Activated T-helper 2 cell treated with anti-CD3 and anti-CD28 coated beads, Interferon-gamma antibody, Interleukin-2, Interleukin-4, amounts not matched to agents 10 μg/mL and 5 μg/mL and 100 μg/mL, durations not matched to agents 14 hours and 24 hours and 36 hours (primary cell): ENCODE measurements at regions of chr7 and their contacts with region 1.

Region 1: DNA sequence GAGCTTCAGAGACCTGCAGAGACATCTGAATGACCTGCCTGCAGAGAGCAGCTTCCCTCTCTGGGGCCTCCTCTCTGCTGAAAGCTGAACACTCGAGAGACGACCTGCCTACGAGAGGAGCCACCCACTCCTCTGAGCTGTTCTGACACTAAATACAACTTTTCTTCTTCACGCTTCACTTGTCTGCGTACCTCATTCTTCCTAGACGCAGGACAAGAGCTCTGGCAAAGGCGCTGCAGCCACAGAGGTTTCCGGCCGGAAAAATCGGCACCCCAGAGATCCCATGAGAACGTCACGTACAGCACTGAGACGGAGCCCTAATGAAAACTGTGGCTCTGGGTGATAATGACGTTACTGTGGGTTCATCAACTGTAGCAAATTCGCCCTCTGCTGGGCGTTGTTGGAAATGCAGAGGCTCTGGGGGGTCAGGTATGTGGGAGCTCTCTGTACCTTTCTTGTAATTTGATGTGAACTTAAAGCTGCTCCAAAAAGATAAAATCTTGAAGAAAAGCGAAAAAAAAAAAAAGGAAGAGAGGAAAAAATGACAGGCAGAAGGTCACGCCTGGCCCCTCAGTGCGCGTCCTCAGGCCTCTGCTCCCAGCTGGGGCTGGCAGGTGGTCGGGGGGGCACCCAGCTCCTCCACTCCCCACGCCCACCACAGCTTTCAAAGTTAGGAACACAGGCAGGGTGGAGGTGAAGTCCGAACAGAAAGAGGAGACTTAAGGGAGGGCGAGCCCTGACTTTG is 120.7 kb downstream of the DYNC2I1 start:
- DNase-seq: peak; percentile 79
- H3K4me3 Mint-ChIP-seq: peak overlapping the region; percentile 77
- H3K27ac Mint-ChIP-seq: peak overlapping the region; percentile 88
- H3K4me1 Mint-ChIP-seq: peaks cover 17% of the 10 kb centered on the region
- H3K27me3 Mint-ChIP-seq: no peaks in the 10 kb centered on the region

Region 2: DNA sequence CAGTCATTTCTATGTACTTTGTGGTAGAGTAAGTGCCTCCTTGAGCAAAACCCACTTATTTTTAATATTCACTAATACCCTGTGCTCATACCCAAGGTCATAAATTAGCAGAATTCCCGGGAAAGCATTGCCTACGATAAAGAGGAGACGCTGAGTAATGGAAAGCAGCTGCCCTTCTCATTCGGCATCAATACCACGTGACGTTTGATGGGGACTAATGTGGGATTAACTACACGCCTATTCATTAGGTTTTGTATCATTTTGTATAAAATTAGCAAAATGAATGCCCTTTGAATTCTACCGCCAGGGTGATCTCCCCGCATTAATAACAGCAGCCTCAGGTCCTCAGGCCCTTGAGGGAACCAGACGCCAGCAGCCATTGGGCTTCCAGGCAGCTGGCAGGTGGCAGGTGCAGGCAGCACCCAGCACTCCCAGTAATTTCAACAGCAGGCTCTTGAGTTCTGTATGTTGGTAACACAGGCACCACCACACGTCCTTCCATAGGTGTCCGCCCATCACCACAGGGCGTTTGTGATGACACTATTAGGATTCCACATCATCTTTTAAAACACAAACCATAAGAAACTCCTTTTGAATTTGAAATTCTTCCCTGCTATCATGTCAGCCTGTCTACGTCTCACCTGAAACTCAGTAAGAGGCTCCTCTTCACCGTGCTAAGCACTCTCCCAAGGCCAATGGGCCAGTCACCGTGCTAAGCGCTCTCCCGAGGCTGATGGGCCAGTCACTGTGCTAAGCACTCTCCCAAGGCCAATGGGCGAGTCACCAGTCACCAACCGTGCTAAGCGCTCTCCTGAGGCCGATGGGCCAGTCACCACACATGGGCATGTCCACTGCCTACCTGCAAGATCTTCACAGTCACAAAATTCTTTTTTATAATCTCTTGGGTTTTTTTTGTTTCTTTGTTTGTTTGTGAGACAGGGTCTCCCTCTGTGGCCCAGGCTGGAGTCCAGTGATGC is 898.8 kb before region 1 on chr7:
- intact Hi-C with region 1: no loop called
- DNase-seq: no peak
- H3K4me3 Mint-ChIP-seq: no peak overlapping the region
- H3K27ac Mint-ChIP-seq: no peak overlapping the region
- H3K4me1 Mint-ChIP-seq: no peaks in the 10 kb centered on the region
- H3K27me3 Mint-ChIP-seq: no peaks in the 10 kb centered on the region

Region 3: GRCh38 chr7:158695726-158696452 is 281.1 kb before region 1 on chr7:
- intact Hi-C with region 1: loop called (anchors 1 kb)
- DNase-seq: no peak
- H3K4me3 Mint-ChIP-seq: no peak overlapping the region
- H3K27ac Mint-ChIP-seq: peak overlapping the region; percentile 47
- H3K4me1 Mint-ChIP-seq: peaks cover 45% of the 10 kb centered on the region
- H3K27me3 Mint-ChIP-seq: no peaks in the 10 kb centered on the region

Region 4: GRCh38 chr7:158779061-158780000 is 197.7 kb before region 1 on chr7:
- intact Hi-C with region 1: loop called (anchors 5 kb)
- DNase-seq: no peak
- H3K4me3 Mint-ChIP-seq: no peak overlapping the region
- H3K27ac Mint-ChIP-seq: peak overlapping the region; percentile 50
- H3K4me1 Mint-ChIP-seq: peaks cover 46% of the 10 kb centered on the region
- H3K27me3 Mint-ChIP-seq: no peaks in the 10 kb centered on the region

Region 5: GRCh38 chr7:158885624-158886023 is 91.4 kb before region 1 on chr7:
- intact Hi-C with region 1: loop called (anchors 2 kb)
- DNase-seq: no peak
- H3K4me3 Mint-ChIP-seq: no peak overlapping the region
- H3K27ac Mint-ChIP-seq: no peak overlapping the region
- H3K4me1 Mint-ChIP-seq: no peaks in the 10 kb centered on the region
- H3K27me3 Mint-ChIP-seq: no peaks in the 10 kb centered on the region

Region 6: DNA sequence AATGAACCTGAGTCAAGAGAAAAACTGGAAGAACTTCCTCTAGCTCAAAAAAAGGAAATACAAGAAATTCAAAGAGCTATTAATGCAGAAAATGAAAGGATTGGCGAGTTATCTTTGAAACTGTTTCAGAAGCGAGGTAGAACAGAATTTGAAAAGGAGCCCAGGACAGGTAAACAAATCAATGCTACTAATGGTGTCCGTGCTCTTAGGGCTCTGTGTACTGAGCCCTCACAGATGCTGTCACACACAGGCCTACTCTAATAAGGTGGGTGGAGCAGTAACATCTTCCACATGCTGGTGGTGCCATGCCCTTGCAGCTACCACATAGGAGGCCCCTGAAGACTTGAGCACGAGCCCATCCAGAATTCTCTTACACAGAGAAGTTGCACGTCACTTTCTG is 74.6 kb before region 1 on chr7:
- intact Hi-C with region 1: no loop called
- DNase-seq: no peak
- H3K4me3 Mint-ChIP-seq: no peak overlapping the region
- H3K27ac Mint-ChIP-seq: no peak overlapping the region
- H3K4me1 Mint-ChIP-seq: peaks cover 10% of the 10 kb centered on the region
- H3K27me3 Mint-ChIP-seq: no peaks in the 10 kb centered on the region

Region 7: GRCh38 chr7:158963771-158964241 is 13.2 kb before region 1 on chr7:
- intact Hi-C with region 1: no loop called
- DNase-seq: no peak
- H3K4me3 Mint-ChIP-seq: no peak overlapping the region
- H3K27ac Mint-ChIP-seq: no peak overlapping the region
- H3K4me1 Mint-ChIP-seq: no peaks in the 10 kb centered on the region
- H3K27me3 Mint-ChIP-seq: peaks cover 2% of the 10 kb centered on the region